HepG2 (cell line): ENCODE measurements at regions of chr14 and their contacts with region 1.

Region 1: GRCh38 chr14:23910101-23910875 is 43.3 kb upstream of the DHRS4 start:
- DNase-seq: peak; percentile 81
- ATAC-seq: peak; percentile 96
- H3K4me3 ChIP-seq: no peak overlapping the region
- H3K27ac ChIP-seq: no peak overlapping the region
- H3K4me1 ChIP-seq: no peaks in the 10 kb centered on the region
- H3K27me3 ChIP-seq: peaks cover 0 to 2% of the 10 kb centered on the region in 2 experiments; a peak in 1 of 5 replicates
- CTCF ChIP-seq: peak; percentile 98
- EP300 ChIP-seq: no peak
- POLR2A ChIP-seq: no peak
- RAD21 ChIP-seq: peak; percentile 97

Region 2: GRCh38 chr14:23665375-23666192 is 244.7 kb before region 1 on chr14:
- CTCF ChIA-PET with region 1: interaction called, 63 read pairs
- POLR2A ChIA-PET with region 1: interaction called, 16 read pairs
- in situ Hi-C with region 1: loop called (anchors 5 kb)
- intact Hi-C with region 1: loop called (anchors 1 kb)
- DNase-seq: peak; percentile 85
- ATAC-seq: peak; percentile 87
- H3K4me3 ChIP-seq: no peak overlapping the region
- H3K27ac ChIP-seq: no peak overlapping the region
- H3K4me1 ChIP-seq: peaks cover 17% of the 10 kb centered on the region
- H3K27me3 ChIP-seq: peaks cover 2 to 11% of the 10 kb centered on the region in 2 experiments; a peak in 3 of 5 replicates
- CTCF ChIP-seq: peak; percentile 92
- EP300 ChIP-seq: no peak
- POLR2A ChIP-seq: no peak
- RAD21 ChIP-seq: peak; percentile 89

Region 3: GRCh38 chr14:23766737-23767401 is 143.4 kb before region 1 on chr14:
- CTCF ChIA-PET with region 1: no interaction called
- POLR2A ChIA-PET with region 1: no interaction called
- in situ Hi-C with region 1: no loop called
- intact Hi-C with region 1: loop called (anchors 1 kb)
- DNase-seq: no peak
- ATAC-seq: no peak
- H3K4me3 ChIP-seq: no peak overlapping the region
- H3K27ac ChIP-seq: no peak overlapping the region
- H3K4me1 ChIP-seq: no peaks in the 10 kb centered on the region
- H3K27me3 ChIP-seq: no peaks in the 10 kb centered on the region
- CTCF ChIP-seq: no peak
- EP300 ChIP-seq: no peak
- POLR2A ChIP-seq: no peak
- RAD21 ChIP-seq: no peak

Region 4: GRCh38 chr14:23801766-23802165 is 108.5 kb before region 1 on chr14:
- CTCF ChIA-PET with region 1: no interaction called
- POLR2A ChIA-PET with region 1: no interaction called
- in situ Hi-C with region 1: no loop called
- intact Hi-C with region 1: no loop called
- DNase-seq: no peak
- ATAC-seq: no peak
- H3K4me3 ChIP-seq: no peak overlapping the region
- H3K27ac ChIP-seq: no peak overlapping the region
- H3K4me1 ChIP-seq: no peaks in the 10 kb centered on the region
- H3K27me3 ChIP-seq: 0 out of 5 replicates have a peak, but pooled peaks cover 0 to 4% of the 10 kb centered on the region in 2 experiments
- CTCF ChIP-seq: no peak
- EP300 ChIP-seq: no peak
- POLR2A ChIP-seq: no peak
- RAD21 ChIP-seq: no peak

Region 5: GRCh38 chr14:24280797-24281460 is 370.6 kb after region 1 on chr14:
- CTCF ChIA-PET with region 1: no interaction called
- POLR2A ChIA-PET with region 1: no interaction called
- in situ Hi-C with region 1: no loop called
- intact Hi-C with region 1: no loop called
- DNase-seq: no peak
- ATAC-seq: no peak; the same call in 2 of the 3 replicates
- H3K4me3 ChIP-seq: no peak overlapping the region
- H3K27ac ChIP-seq: no peak overlapping the region
- H3K4me1 ChIP-seq: no peaks in the 10 kb centered on the region
- H3K27me3 ChIP-seq: no peaks in the 10 kb centered on the region
- CTCF ChIP-seq: no peak
- EP300 ChIP-seq: no peak
- POLR2A ChIP-seq: no peak
- RAD21 ChIP-seq: no peak